A549 (cell line): ENCODE measurements at regions of chr17 and their contacts with region 1.

Region 1: DNA sequence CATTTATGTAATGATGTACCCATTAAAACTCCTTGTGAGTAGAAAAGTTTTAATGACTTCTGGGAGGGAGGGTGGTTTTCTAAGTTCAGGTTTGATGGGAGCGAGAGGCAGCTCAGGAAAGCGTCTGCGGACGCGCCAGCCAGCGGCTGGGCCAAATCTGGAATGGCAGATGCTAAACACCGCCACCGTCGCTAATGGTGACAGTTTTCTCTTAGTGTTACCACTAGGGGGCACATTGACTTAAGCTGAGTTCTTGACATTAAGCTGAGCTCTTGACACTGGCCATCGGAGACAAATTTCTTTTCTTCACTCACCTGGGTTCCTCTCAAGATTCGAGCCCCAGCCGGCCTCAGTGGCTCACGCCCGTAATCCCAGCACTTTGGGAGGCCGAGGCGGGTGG is 6.7 kb downstream of the TRPV1 start:
- DNase-seq: peak; percentile 48 to 70
- ATAC-seq: peak in 1 of 2 experiments; percentile 72; a peak in 3 of 6 replicates
- H3K4me3 ChIP-seq: no peak overlapping the region
- H3K27ac ChIP-seq: no peak overlapping the region
- H3K4me1 ChIP-seq: peaks cover 8% of the 10 kb centered on the region; the same call in 1 of the 3 replicates
- CTCF ChIP-seq: peak; percentile 46
- EP300 ChIP-seq: no peak
- POLR2A ChIP-seq: no peak
- RAD21 ChIP-seq: peak; percentile 30 to 53; a peak in 3 of 5 replicates

Region 2: DNA sequence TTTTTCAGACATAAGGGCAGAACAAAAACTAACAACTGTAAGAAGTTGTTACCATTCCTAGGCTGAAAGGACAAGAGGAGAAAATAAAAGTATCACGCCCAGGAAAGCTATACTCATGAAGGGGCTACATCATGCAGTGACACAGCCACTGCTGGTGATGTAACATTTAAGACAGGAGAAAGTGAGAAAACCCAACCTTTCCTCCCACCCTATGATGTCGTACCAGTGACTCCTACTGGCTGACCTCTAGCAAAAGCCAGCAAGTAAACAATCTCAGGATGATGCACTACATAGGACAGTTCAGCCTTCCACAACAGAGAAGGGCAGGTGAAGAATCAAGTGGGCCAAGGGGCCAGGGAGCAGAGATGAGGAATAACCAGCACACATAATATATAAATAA is 154.9 kb before region 1 on chr17:
- CTCF ChIA-PET with region 1: no interaction called
- POLR2A ChIA-PET with region 1: no interaction called
- DNase-seq: peak in 1 of 2 experiments; percentile 52
- ATAC-seq: peak; percentile 71 to 80
- H3K4me3 ChIP-seq: no peak overlapping the region
- H3K27ac ChIP-seq: no peak overlapping the region
- H3K4me1 ChIP-seq: no peaks in the 10 kb centered on the region
- CTCF ChIP-seq: peak; percentile 15; the same call in 1 of the 3 replicates
- EP300 ChIP-seq: no peak
- POLR2A ChIP-seq: no peak
- RAD21 ChIP-seq: peak; percentile 33 to 58; a peak in 2 of 5 replicates

Region 3: DNA sequence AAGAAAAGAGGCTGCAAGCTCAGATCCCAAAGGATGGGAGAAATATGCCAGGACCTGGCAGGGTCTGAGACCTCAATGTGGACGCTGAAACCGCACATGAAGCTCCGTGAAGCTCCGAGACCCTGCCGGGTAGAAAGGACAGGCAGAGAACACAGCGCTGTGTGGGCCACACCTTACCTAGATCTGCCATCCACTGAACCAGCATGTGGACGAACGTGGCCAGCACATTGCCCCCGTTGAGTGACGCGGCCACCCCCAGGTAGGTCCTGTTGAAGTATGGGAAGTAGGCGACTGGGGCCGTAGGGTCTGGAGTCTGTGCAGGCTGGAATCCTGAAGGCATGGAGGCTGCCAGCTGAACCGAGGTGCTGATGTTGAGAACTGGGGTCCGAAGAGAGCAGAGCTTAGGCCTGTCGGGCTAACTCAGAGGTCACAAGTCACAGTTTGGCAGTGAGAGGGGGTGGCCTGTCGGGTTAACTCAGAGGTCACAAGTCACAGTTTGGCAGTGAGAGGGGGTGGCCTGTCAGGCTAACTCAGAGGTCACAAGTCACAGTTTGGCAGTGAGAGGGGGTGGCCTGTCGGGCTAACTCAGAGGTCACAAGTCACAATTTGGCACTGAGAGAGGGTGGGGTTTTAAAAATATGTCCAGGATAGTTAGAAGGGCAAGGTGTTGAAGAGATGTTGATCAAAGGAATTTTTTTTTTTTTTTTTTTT is 12.8 kb after region 1 on chr17:
- CTCF ChIA-PET with region 1: interaction called, 13 read pairs
- POLR2A ChIA-PET with region 1: no interaction called
- DNase-seq: no peak
- ATAC-seq: no peak
- H3K4me3 ChIP-seq: no peak overlapping the region
- H3K27ac ChIP-seq: no peak overlapping the region
- H3K4me1 ChIP-seq: no peaks in the 10 kb centered on the region
- CTCF ChIP-seq: no peak
- EP300 ChIP-seq: no peak
- POLR2A ChIP-seq: no peak
- RAD21 ChIP-seq: no peak

Region 4: GRCh38 chr17:3762922-3763776 is 160.7 kb after region 1 on chr17:
- CTCF ChIA-PET with region 1: no interaction called
- POLR2A ChIA-PET with region 1: no interaction called
- DNase-seq: no peak
- ATAC-seq: no peak
- H3K4me3 ChIP-seq: no peak overlapping the region
- H3K27ac ChIP-seq: no peak overlapping the region
- H3K4me1 ChIP-seq: no peaks in the 10 kb centered on the region
- CTCF ChIP-seq: no peak
- EP300 ChIP-seq: no peak
- POLR2A ChIP-seq: no peak
- RAD21 ChIP-seq: no peak